HCT116 (cell line): ENCODE measurements at regions of chr11 and their contacts with region 1.

Region 1: DNA sequence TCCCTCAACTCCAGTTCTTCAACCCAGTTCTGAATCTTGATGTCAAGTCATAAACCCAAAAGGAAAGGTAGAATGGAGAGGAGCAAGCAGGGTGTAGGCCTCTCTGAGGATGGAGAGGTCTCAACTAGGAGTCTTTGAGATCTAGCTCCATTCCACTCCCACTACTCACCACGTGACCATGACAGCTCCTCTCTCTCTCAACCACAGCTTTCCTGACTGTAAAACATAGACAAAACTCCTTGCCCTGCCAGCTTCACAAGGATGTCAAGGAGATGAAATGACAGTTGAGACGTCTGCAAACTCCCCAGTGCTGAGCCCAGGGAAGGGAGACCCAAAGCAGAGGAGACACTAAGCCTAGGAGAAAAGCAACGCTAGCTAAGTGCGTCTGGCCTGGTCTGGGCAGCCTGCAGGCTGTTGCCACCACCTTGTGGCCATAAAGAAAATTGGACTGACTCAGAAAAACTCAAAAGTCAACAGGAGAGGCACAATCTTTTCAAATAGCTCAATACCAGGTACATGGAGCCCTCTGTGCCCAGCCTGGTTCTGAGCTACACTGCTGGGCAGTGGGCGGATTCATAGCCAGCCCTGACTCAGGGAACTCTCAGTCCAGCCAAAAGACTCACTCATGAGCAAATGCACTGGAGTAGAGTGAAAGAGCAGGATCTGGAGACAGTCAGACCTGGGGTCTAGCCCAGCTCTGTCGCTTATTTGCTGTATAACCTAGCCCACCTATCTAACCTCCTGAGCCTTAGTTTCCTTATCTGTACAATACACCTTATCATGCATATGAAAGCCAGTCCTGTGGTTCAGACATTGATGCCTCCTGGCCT is 3.4 kb downstream of the CLPB start:
- DNase-seq: no peak
- ATAC-seq: peak; percentile 17; the same call in 1 of the 2 replicates
- H3K4me3 ChIP-seq: no peak overlapping the region
- H3K27ac ChIP-seq: no peak overlapping the region
- H3K4me1 ChIP-seq: peaks cover 0 to 6% of the 10 kb centered on the region in 2 experiments; a peak in 1 of 4 replicates
- H3K27me3 ChIP-seq: no peaks in the 10 kb centered on the region
- CTCF ChIP-seq: peak; percentile 70 to 85 (median 81)
- POLR2A ChIP-seq: no peak
- RAD21 ChIP-seq: peak; percentile 88

Region 2: GRCh38 chr11:71977743-71978418 is 453.1 kb before region 1 on chr11:
- CTCF ChIA-PET with region 1: interaction called, 14 read pairs
- POLR2A ChIA-PET with region 1: no interaction called
- RAD21 ChIA-PET with region 1: no interaction called
- intact Hi-C with region 1: loop called (anchors 2 kb)
- DNase-seq: peak; percentile 15
- ATAC-seq: peak; percentile 78
- H3K4me3 ChIP-seq: no peak overlapping the region
- H3K27ac ChIP-seq: no peak overlapping the region
- H3K4me1 ChIP-seq: no peaks in the 10 kb centered on the region
- H3K27me3 ChIP-seq: no peaks in the 10 kb centered on the region
- CTCF ChIP-seq: peak; percentile 52 to 70 (median 59); a peak in 5 of 6 replicates
- POLR2A ChIP-seq: no peak
- RAD21 ChIP-seq: peak; percentile 71

Region 3: GRCh38 chr11:72112321-72113219 is 318.4 kb before region 1 on chr11 and contains the start of gene ANAPC15:
- CTCF ChIA-PET with region 1: interaction called, 4 read pairs
- POLR2A ChIA-PET with region 1: no interaction called
- RAD21 ChIA-PET with region 1: no interaction called
- intact Hi-C with region 1: loop called (anchors 10 kb)
- DNase-seq: peak; percentile 99
- ATAC-seq: peak; percentile 91
- H3K4me3 ChIP-seq: peak within 1 kb of the TSS; percentile 60 to 82
- H3K27ac ChIP-seq: peak within 1 kb of the TSS; percentile 76
- H3K4me1 ChIP-seq: peaks cover 4 to 20% of the 10 kb centered on the region in 2 experiments; a peak in 3 of 4 replicates
- H3K27me3 ChIP-seq: no peaks in the 10 kb centered on the region
- CTCF ChIP-seq: no peak
- POLR2A ChIP-seq: peak; percentile 94
- RAD21 ChIP-seq: no peak
- total RNA-seq, gene ANAPC15: 65.6 TPM

Region 4: GRCh38 chr11:72238040-72238450 is 192.9 kb before region 1 on chr11:
- CTCF ChIA-PET with region 1: interaction called, 10 read pairs
- POLR2A ChIA-PET with region 1: no interaction called
- RAD21 ChIA-PET with region 1: no interaction called
- intact Hi-C with region 1: no loop called
- DNase-seq: peak; percentile 44
- ATAC-seq: peak; percentile 94
- H3K4me3 ChIP-seq: no peak overlapping the region
- H3K27ac ChIP-seq: no peak overlapping the region
- H3K4me1 ChIP-seq: peaks cover 0 to 4% of the 10 kb centered on the region in 2 experiments; a peak in 1 of 4 replicates
- H3K27me3 ChIP-seq: no peaks in the 10 kb centered on the region
- CTCF ChIP-seq: peak; percentile 62 to 92 (median 86); a peak in 5 of 6 replicates
- POLR2A ChIP-seq: no peak
- RAD21 ChIP-seq: peak; percentile 72

Region 5: DNA sequence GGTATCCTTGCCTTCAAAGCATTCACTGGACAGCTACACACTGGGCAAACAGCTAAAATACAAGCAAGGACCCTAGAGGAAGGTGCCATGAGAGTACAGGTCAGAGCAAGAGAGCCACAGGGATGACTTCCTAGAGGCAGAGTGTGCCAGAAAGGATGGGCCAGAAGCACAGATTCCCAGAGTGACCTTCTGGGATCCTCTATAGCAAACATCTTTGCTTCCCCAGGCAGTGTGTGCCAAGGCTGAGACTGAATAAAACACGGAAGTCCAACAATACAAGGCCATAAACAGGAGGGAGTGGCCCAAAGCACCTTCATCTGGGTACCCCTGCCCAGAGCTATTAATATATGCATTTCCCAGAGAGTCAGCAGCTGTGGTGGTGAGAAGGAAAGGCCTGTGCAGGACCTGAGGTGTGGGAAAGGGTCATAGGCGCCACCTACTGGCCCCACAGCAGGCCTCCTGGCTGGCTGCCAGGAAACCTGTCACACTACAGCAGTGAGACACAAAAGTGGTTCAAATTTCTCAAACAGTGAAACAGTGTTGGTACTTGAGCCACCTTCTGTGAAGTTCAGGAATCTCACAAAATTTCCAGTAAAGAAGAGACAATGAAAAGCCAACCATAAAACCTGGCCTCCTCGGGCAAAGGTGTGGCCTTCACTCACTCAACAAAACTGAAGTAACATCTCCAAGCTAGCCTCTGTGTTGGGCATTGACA is 16.9 kb before region 1 on chr11:
- CTCF ChIA-PET with region 1: interaction called, 16 read pairs
- POLR2A ChIA-PET with region 1: no interaction called
- RAD21 ChIA-PET with region 1: no interaction called
- intact Hi-C with region 1: no loop called
- DNase-seq: peak; percentile 57
- ATAC-seq: peak; percentile 90
- H3K4me3 ChIP-seq: no peak overlapping the region
- H3K27ac ChIP-seq: no peak overlapping the region
- H3K4me1 ChIP-seq: peaks cover 0 to 9% of the 10 kb centered on the region in 2 experiments; a peak in 2 of 4 replicates
- H3K27me3 ChIP-seq: no peaks in the 10 kb centered on the region
- CTCF ChIP-seq: peak; percentile 86 to 93 (median 90)
- POLR2A ChIP-seq: no peak
- RAD21 ChIP-seq: peak; percentile 82

Region 6: DNA sequence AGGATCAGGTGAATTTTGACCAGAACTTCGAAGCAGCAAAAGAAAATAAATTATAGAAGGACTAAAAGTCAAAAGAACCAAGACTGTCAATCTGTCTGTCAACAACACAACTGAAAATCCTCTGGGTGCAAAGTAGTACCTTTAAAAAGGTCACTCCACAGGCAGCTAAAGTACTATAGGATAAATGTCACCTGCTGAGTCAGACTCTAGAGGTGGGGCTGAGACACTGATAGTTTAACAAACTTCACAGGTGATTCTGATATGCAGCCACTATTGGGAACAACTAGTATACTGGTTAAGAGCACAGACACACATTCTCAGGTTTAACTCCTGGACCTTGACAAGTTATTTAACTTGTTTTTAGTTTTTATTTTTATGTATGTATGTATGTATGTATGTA is 603.8 kb after region 1 on chr11:
- CTCF ChIA-PET with region 1: no interaction called
- POLR2A ChIA-PET with region 1: no interaction called
- RAD21 ChIA-PET with region 1: no interaction called
- intact Hi-C with region 1: no loop called
- DNase-seq: no peak
- ATAC-seq: no peak
- H3K4me3 ChIP-seq: no peak overlapping the region
- H3K27ac ChIP-seq: no peak overlapping the region
- H3K4me1 ChIP-seq: no peaks in the 10 kb centered on the region
- H3K27me3 ChIP-seq: no peaks in the 10 kb centered on the region
- CTCF ChIP-seq: no peak
- POLR2A ChIP-seq: no peak
- RAD21 ChIP-seq: no peak